ENCODE measurements at regions of chr7 and their contacts with region 1.

Region 1: GRCh38 chr7:5704534-5704922 is 76.9 kb downstream of the RNF216 start:
- DNase-seq: peak; percentile 61
- H3K4me3 ChIP-seq: no peak overlapping the region
- H3K27ac ChIP-seq: no peak overlapping the region
- H3K4me1 ChIP-seq: peaks cover 41% of the 10 kb centered on the region
- H3K27me3 ChIP-seq: no peaks in the 10 kb centered on the region
- CTCF ChIP-seq: peak; percentile 94 to 99

Region 2: GRCh38 chr7:5629941-5630340 is 74.6 kb before region 1 on chr7:
- CTCF ChIA-PET with region 1: no interaction called
- dilution Hi-C with region 1: loop called (anchors 10 kb)
- in situ Hi-C with region 1: no loop called
- intact Hi-C with region 1: no loop called
- DNase-seq: peak; percentile 86
- H3K4me3 ChIP-seq: no peak overlapping the region
- H3K27ac ChIP-seq: peak overlapping the region; percentile 82
- H3K4me1 ChIP-seq: peaks cover 29% of the 10 kb centered on the region
- H3K27me3 ChIP-seq: no peaks in the 10 kb centered on the region
- CTCF ChIP-seq: peak in 1 of 2 donors; percentile 9

Region 3: DNA sequence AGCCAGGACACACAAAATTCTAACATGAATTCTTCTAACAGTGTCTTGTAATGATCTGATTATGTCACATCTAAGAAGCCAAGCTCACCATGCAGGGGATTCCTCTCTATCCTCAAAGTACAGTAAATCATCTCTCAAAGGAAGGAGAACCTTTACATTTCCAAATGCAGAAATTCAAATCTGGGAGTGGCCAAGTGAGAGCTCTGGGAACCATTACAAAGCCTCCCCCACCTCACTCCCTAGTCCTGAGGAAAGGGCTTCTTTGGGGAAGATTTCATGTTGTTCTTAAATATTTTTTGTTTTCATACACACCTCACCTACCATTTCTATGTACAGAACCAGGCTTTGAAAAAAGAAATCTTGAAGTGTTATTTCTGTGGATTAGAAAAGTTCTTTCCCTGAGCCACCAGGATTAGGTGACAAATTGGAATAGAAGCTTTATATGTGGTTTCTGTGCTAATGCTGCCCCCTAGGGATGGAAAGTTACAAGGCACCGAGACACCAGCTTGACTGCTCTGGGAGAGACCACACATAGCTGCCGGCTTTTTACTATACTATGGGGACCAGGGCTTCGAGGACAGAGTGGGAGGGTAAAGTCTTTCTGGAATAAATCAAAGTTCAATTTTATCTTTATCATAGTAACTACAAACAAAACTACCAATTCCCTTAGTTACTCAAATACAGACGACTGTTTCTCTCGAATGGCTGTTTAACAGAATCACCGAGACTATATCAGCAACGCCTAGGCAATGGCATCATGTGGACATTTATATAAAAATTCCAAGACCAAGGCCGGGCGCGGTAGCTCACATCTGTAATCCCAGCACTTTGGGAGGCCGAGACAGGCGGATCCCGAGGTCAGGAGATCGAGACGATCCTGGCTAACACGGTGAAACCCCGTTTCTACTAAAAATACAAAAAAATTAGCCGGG is 39.2 kb before region 1 on chr7:
- CTCF ChIA-PET with region 1: no interaction called
- dilution Hi-C with region 1: no loop called
- in situ Hi-C with region 1: no loop called
- intact Hi-C with region 1: loop called (anchors 1 kb)
- DNase-seq: peak; percentile 61
- H3K4me3 ChIP-seq: no peak overlapping the region
- H3K27ac ChIP-seq: no peak overlapping the region
- H3K4me1 ChIP-seq: no peaks in the 10 kb centered on the region
- H3K27me3 ChIP-seq: no peaks in the 10 kb centered on the region
- CTCF ChIP-seq: peak; percentile 87 to 89

Region 4: DNA sequence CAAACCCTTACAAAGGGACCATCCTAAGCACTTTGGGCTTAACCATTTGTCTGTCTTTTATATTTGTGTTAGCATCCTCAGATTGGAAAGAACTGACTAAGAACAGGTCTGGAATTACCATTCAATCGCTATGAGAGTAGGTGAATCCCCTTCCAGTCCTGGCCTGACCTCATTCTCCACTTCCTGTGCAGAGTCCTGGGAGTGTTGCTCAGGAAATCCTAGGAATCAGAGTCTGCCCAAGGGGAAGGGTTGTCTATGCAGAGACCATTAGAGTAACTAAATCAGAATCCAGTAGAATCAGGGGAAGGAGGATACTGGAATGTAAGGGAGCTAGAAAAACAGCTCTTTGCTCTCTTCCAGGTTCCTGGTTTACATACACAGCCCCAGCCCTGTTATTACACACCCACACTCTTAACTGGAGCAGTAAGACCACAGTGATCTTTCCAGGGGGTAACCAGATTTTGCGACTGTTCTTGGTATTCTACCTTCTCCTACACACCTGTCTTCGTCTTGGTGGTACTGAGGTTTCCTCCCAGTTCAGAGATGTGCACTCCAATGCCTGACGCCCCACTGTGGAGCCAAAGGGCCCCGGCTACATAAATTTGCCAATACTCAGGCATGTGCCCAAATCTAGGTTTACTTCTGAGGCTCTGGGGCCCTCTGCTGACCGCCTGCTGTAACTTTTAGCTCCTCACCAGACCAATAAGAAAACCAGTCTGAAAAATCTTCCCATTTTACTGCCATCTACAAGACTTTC is 26.8 kb before region 1 on chr7:
- CTCF ChIA-PET with region 1: interaction called, 6 read pairs
- dilution Hi-C with region 1: no loop called
- in situ Hi-C with region 1: no loop called
- intact Hi-C with region 1: loop called (anchors 1 kb)
- DNase-seq: peak; percentile 63
- H3K4me3 ChIP-seq: no peak overlapping the region
- H3K27ac ChIP-seq: peak overlapping the region; percentile 30
- H3K4me1 ChIP-seq: peaks cover 11% of the 10 kb centered on the region
- H3K27me3 ChIP-seq: no peaks in the 10 kb centered on the region
- CTCF ChIP-seq: peak; percentile 75

Region 5: DNA sequence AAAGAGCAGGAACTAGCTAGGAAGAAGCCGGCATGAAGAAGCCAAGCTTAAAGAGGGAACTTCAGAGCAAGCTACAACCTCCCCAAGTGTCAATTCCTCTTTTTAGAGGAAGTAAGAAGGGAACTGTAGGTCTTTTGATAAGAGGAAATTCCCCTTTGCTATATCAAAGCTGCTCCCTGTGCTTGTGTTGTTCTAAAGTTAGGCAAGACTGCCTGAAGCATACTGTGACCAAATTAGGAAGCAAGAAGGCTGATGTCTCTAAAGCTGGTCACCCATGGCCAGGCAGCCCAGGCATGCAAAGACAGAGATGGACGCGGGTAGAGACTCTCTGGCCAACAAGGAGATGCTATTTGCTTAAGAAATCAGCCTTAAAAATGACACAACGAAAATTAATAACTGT is 11.0 kb before region 1 on chr7:
- CTCF ChIA-PET with region 1: no interaction called
- dilution Hi-C with region 1: no loop called
- in situ Hi-C with region 1: no loop called
- intact Hi-C with region 1: loop called (anchors 1 kb)
- DNase-seq: peak; percentile 75
- H3K4me3 ChIP-seq: no peak overlapping the region
- H3K27ac ChIP-seq: peak overlapping the region; percentile 97
- H3K4me1 ChIP-seq: peaks cover 71% of the 10 kb centered on the region
- H3K27me3 ChIP-seq: no peaks in the 10 kb centered on the region
- CTCF ChIP-seq: no peak

Region 6: DNA sequence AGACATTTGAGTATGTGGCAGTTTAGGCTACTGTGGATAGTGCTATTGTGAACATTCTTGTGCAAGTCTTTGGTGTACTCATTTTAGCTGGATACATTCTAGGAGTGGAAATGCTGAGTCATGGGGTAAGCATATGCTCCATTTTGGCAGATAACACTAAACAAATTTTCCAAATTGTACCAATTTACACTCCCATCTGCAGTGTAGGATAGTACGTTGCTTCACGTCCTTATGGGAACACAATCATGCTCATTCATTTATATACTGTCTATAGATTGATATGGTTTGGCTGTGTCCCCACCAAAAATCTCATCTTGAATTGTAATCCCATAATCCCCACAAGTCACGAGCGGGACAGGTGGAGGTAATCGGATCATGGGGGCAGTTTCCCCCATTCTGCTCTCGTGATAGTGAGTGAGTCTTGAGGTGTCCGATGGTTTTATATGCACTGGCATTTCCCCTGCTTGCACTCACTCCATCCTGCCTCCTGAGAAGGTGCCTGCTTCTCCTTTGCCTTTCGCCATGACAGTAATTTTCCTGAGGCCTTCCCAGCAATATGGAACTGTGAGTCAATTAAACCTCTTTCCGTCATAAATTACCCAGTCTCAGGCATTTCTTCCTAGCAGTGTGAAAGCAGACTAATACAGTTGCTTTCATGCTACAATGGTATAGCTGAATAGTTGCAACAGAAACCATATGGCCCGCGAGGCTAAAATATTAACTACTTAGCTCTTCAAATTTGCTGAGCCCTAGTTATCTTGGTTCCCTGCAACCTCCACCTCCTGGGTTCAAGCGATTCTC is 51.4 kb after region 1 on chr7:
- CTCF ChIA-PET with region 1: no interaction called
- dilution Hi-C with region 1: no loop called
- in situ Hi-C with region 1: no loop called
- intact Hi-C with region 1: no loop called
- DNase-seq: no peak
- H3K4me3 ChIP-seq: no peak overlapping the region
- H3K27ac ChIP-seq: no peak overlapping the region
- H3K4me1 ChIP-seq: peaks cover 3% of the 10 kb centered on the region
- H3K27me3 ChIP-seq: no peaks in the 10 kb centered on the region
- CTCF ChIP-seq: no peak

Region 7: DNA sequence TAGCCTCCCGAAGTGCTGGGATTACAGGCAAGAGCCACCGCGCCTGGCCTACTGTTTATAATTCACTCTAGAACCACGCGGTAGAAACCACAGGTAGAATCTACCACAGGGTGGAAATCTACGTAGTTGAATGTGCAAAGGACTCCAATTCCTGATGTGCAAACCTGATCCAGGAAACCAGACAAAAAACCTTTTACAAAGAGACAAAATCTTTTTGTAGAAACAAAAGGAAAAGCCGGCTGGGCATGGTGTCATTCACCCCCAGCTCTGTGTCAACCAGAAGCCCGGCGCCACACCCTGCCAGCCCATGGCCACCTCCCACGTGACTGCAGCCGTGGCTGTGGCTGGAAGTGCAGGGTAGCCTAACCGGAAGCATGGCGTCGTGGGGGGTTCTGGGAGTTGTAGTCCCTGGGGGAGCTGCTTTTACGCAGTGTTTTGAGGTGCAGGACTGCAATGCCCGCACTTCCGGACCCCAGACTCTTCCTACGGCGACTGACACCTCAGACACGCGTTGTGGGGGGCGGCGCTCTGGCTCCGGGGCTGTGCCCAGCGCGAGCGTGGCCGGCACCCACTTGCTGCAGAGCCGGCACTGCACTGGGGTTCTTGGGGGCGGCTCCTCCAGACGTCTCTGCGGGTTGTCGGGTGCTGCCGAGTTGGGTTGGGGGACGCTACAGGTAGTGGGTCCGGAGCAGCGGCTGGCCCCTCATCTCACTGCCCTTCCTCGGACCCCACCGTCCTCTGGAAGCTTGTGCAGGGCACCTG is 118.4 kb after region 1 on chr7:
- CTCF ChIA-PET with region 1: no interaction called
- dilution Hi-C with region 1: no loop called
- in situ Hi-C with region 1: no loop called
- intact Hi-C with region 1: no loop called
- DNase-seq: peak; percentile 90
- H3K4me3 ChIP-seq: peak overlapping the region; percentile 68 to 91 (median 71)
- H3K27ac ChIP-seq: peak overlapping the region; percentile 22
- H3K4me1 ChIP-seq: no peaks in the 10 kb centered on the region
- H3K27me3 ChIP-seq: no peaks in the 10 kb centered on the region
- CTCF ChIP-seq: no peak

Measured in mammary epithelial cell (primary cell).